ENCODE measurements at regions of chr1 and their contacts with region 1.

Region 1: GRCh38 chr1:182604169-182605164 is at the start of gene RGS16:
- DNase-seq: peak; percentile 66
- H3K4me3 ChIP-seq: peak within 1 kb of the TSS in 1 of 3 experiments; percentile 2
- H3K27ac ChIP-seq: no peak within 1 kb of the TSS
- H3K4me1 ChIP-seq: no peaks in the 10 kb centered on the region
- H3K27me3 ChIP-seq: peaks cover 25 to 28% of the 10 kb centered on the region in 2 experiments
- CTCF ChIP-seq: no peak
- POLR2A ChIP-seq: no peak
- total RNA-seq, gene RGS16: not detected in 2 replicates

Region 2: GRCh38 chr1:182391362-182392044 is 213.0 kb before region 1 on chr1 and contains the start of gene GLUL:
- CTCF ChIA-PET with region 1: no interaction called
- POLR2A ChIA-PET with region 1: no interaction called
- dilution Hi-C with region 1: no loop called
- intact Hi-C with region 1: loop called (anchors 5 kb)
- DNase-seq: peak; percentile 94
- H3K4me3 ChIP-seq: peak within 1 kb of the TSS; percentile 70 to 90 (median 76)
- H3K27ac ChIP-seq: peak within 1 kb of the TSS; percentile 81
- H3K4me1 ChIP-seq: peaks cover 4% of the 10 kb centered on the region
- H3K27me3 ChIP-seq: no peaks in the 10 kb centered on the region
- CTCF ChIP-seq: peak in 1 of 2 donors; percentile 33
- POLR2A ChIP-seq: peak; percentile 99
- total RNA-seq, gene GLUL: 181 and 187 TPM in 2 replicates

Region 3: GRCh38 chr1:182588500-182589452 is 15.7 kb before region 1 on chr1 and contains the start of gene RNASEL:
- CTCF ChIA-PET with region 1: interaction called, 31 read pairs
- POLR2A ChIA-PET with region 1: no interaction called
- dilution Hi-C with region 1: no loop called
- intact Hi-C with region 1: no loop called
- DNase-seq: peak; percentile 53
- H3K4me3 ChIP-seq: peak within 1 kb of the TSS; percentile 53 to 99 (median 95)
- H3K27ac ChIP-seq: peak within 1 kb of the TSS; percentile 71
- H3K4me1 ChIP-seq: peaks cover 9% of the 10 kb centered on the region
- H3K27me3 ChIP-seq: peaks cover 0 to 1% of the 10 kb centered on the region in 2 experiments
- CTCF ChIP-seq: no peak
- POLR2A ChIP-seq: no peak
- total RNA-seq, gene RNASEL: 1.3 and 1.9 TPM in 2 replicates

Region 4: GRCh38 chr1:182614796-182615454 is 10.5 kb after region 1 on chr1:
- CTCF ChIA-PET with region 1: interaction called, 31 read pairs
- POLR2A ChIA-PET with region 1: no interaction called
- dilution Hi-C with region 1: no loop called
- intact Hi-C with region 1: loop called (anchors 1 kb)
- DNase-seq: peak; percentile 55
- H3K4me3 ChIP-seq: peak overlapping the region; percentile 38 to 46 (median 39)
- H3K27ac ChIP-seq: no peak overlapping the region
- H3K4me1 ChIP-seq: peaks cover 11% of the 10 kb centered on the region
- H3K27me3 ChIP-seq: peaks cover 56 to 63% of the 10 kb centered on the region in 2 experiments
- CTCF ChIP-seq: no peak
- POLR2A ChIP-seq: no peak

Region 5: DNA sequence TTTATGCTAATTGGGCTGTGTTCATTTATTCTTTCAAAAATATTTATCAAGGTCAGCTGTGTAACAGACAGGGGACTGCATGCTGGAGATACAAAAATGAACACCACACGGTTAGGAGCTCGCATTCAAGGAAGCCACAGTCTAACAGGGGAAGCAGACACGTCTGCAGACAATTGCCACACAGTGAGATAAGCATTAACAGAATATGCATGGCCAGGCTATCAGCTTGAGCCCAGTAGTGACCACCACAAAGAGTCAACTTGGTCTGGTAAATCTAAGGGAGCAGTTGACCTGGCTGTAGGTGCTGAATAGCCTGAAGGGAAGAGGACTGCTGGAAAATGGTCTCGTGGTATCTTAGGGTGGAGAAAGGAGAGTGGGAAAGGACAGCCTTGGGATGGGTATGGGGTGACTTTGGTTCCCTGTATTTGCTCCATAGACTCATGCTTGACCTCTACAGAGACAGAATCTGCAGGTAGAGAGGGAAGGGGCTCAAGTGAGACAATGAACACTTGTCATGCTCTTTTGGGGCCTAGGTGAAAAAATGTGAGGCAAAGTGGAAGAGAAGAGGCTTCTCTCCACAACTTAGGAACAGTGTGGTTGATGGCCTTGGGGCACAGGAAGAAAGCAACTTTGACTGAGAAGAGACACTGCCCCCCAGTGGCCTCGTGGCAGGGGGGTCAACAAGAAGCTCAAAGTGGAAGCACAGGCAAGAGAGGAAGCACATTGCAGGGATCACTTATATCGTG is 177.5 kb after region 1 on chr1:
- CTCF ChIA-PET with region 1: interaction called, 891 read pairs
- POLR2A ChIA-PET with region 1: no interaction called
- dilution Hi-C with region 1: no loop called
- intact Hi-C with region 1: loop called (anchors 1 kb)
- DNase-seq: peak; percentile 14
- H3K4me3 ChIP-seq: no peak overlapping the region
- H3K27ac ChIP-seq: no peak overlapping the region
- H3K4me1 ChIP-seq: no peaks in the 10 kb centered on the region
- H3K27me3 ChIP-seq: peaks cover 10 to 20% of the 10 kb centered on the region in 2 experiments
- CTCF ChIP-seq: peak; percentile 41
- POLR2A ChIP-seq: no peak

Region 6: GRCh38 chr1:182789138-182790076 is 184.9 kb after region 1 on chr1 and contains the start of gene NPL:
- CTCF ChIA-PET with region 1: interaction called, 891 read pairs
- POLR2A ChIA-PET with region 1: no interaction called
- dilution Hi-C with region 1: no loop called
- intact Hi-C with region 1: loop called (anchors 1 kb)
- DNase-seq: peak; percentile 71
- H3K4me3 ChIP-seq: peak within 1 kb of the TSS; percentile 41 to 63 (median 54)
- H3K27ac ChIP-seq: no peak within 1 kb of the TSS
- H3K4me1 ChIP-seq: peaks cover 8% of the 10 kb centered on the region
- H3K27me3 ChIP-seq: peaks cover 34 to 59% of the 10 kb centered on the region in 2 experiments
- CTCF ChIP-seq: no peak
- POLR2A ChIP-seq: peak; percentile 42
- total RNA-seq, gene NPL: 0.75 and 1.3 TPM in 2 replicates

Region 7: DNA sequence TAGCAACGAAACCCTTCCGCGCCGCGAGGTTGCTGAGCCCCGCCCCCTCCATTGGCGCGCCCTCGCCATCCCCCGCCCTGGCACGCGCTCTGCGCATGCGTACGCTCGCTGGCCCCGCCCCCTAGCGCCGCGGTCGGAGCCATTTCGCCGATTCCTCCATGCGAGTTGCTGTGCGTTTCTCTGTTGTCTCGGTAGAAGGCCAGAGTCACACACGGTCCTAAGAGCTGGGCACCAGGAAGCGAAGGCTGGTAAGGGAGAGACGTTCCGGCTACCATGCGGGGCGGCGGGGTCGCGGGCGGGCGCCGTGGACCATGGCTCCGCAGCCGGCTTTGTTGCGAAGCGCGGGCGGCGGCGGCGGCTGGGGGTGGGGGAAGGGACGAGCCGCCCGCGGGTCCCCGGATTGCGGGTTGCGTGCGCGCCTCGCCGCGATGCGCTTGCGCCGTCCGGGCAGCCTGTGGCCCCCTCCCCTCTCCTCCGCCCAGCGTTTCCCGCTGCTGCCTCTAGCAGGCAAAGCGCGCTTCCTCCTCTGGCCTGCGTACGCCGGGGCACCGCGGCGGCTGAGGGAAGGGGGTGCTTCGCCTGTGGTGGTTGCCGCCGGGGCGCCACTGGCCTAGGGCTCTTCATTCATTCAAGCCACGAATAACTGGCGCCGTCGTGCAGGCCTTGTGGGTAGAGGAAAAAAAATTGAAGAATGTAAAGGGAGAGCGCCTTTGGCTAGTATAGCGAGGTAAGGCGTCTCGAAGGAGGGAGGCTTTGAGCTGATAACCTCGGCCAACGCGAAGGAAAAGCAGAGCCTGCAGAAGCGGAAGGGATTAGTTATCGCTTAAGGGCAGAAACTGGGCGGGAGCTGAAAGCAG is 235.0 kb after region 1 on chr1 and contains the start of gene DHX9:
- CTCF ChIA-PET with region 1: interaction called, 4 read pairs
- POLR2A ChIA-PET with region 1: no interaction called
- dilution Hi-C with region 1: no loop called
- intact Hi-C with region 1: loop called (anchors 2 kb)
- DNase-seq: peak; percentile 92
- H3K4me3 ChIP-seq: peak within 1 kb of the TSS; percentile 68 to 96 (median 88)
- H3K27ac ChIP-seq: peak within 1 kb of the TSS; percentile 78
- H3K4me1 ChIP-seq: peaks cover 23% of the 10 kb centered on the region
- H3K27me3 ChIP-seq: no peaks in the 10 kb centered on the region
- CTCF ChIP-seq: peak in 1 of 2 donors; percentile 23
- POLR2A ChIP-seq: peak; percentile 99
- total RNA-seq, gene DHX9: 219 and 220 TPM in 2 replicates

Measured in endothelial cell of umbilical vein (primary cell).